PC-9 (cell line): ENCODE measurements at regions of chr15 and their contacts with region 1.

Region 1: GRCh38 chr15:79339564-79340314 is 28.8 kb downstream of the TMED3 start:
- DNase-seq: peak in 1 of 2 experiments; percentile 3
- H3K4me3 ChIP-seq: no peak overlapping the region
- H3K27ac ChIP-seq: no peak overlapping the region
- H3K4me1 ChIP-seq: no peaks in the 10 kb centered on the region
- H3K27me3 ChIP-seq: no peaks in the 10 kb centered on the region
- CTCF ChIP-seq: peak; percentile 86

Region 2: GRCh38 chr15:79028411-79028964 is 311.3 kb before region 1 on chr15:
- CTCF ChIA-PET with region 1: no interaction called
- POLR2A ChIA-PET with region 1: no interaction called
- intact Hi-C with region 1: loop called (anchors 10 kb)
- DNase-seq: peak in 1 of 2 experiments; percentile 46
- H3K4me3 ChIP-seq: no peak overlapping the region
- H3K27ac ChIP-seq: no peak overlapping the region
- H3K4me1 ChIP-seq: no peaks in the 10 kb centered on the region
- H3K27me3 ChIP-seq: no peaks in the 10 kb centered on the region
- CTCF ChIP-seq: peak; percentile 98

Region 3: GRCh38 chr15:79596051-79596507 is 256.3 kb after region 1 on chr15:
- CTCF ChIA-PET with region 1: interaction called, 3 read pairs
- POLR2A ChIA-PET with region 1: interaction called, 5 read pairs
- intact Hi-C with region 1: loop called (anchors 1 kb)
- DNase-seq: peak; percentile 55 to 78
- H3K4me3 ChIP-seq: no peak overlapping the region
- H3K27ac ChIP-seq: no peak overlapping the region
- H3K4me1 ChIP-seq: no peaks in the 10 kb centered on the region
- H3K27me3 ChIP-seq: peaks cover 62% of the 10 kb centered on the region
- CTCF ChIP-seq: peak; percentile 91

Region 4: GRCh38 chr15:79736435-79737000 is 396.8 kb after region 1 on chr15:
- CTCF ChIA-PET with region 1: interaction called, 27 read pairs
- POLR2A ChIA-PET with region 1: no interaction called
- intact Hi-C with region 1: no loop called
- DNase-seq: no peak
- H3K4me3 ChIP-seq: no peak overlapping the region
- H3K27ac ChIP-seq: no peak overlapping the region
- H3K4me1 ChIP-seq: no peaks in the 10 kb centered on the region
- H3K27me3 ChIP-seq: no peaks in the 10 kb centered on the region
- CTCF ChIP-seq: no peak

Region 5: DNA sequence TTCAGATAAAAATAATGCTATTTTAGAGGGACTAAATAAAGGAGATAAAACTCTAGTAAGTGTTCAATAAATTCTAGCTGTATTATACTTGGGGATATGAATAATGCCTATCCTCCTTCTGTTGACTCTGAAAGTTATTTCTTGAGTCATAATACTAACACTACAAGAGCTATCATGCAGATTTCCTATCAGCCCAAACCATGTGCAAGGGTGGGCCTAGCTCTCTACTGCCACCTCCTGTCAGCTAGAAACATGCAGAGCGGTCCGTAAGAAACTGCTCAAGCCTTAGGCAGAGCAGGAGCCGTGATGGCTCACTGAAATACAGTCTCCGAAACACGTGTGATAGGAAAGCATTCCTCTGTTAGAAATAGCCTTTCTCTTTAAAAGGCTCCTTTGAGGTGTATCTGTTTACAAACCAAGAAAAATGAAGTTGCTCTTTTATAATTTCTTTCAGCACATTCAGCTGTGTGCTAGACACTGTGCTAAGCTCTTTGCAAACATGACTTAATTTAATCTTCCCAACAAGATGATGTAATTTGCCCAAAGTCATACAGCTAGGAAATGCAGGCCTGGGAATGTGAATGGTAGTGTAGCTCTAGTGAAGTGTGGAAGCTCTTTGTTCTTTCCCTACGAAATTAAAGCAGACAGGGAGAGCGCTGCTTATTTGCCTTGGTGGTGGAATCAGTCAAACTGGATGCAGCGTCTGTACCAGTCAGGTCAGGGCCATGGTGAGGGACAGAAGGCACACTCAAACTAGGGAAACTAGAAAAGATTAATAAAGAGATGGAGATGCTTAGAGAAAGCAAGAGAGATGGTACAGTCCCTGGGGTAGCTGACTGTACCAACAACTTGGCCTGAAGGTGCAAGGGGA is 514.0 kb after region 1 on chr15:
- CTCF ChIA-PET with region 1: interaction called, 3 read pairs
- POLR2A ChIA-PET with region 1: no interaction called
- intact Hi-C with region 1: loop called (anchors 10 kb)
- DNase-seq: peak; percentile 45 to 53
- H3K4me3 ChIP-seq: no peak overlapping the region
- H3K27ac ChIP-seq: no peak overlapping the region
- H3K4me1 ChIP-seq: no peaks in the 10 kb centered on the region
- H3K27me3 ChIP-seq: no peaks in the 10 kb centered on the region
- CTCF ChIP-seq: peak; percentile 83

Region 6: GRCh38 chr15:80309769-80310384 is 970.1 kb after region 1 on chr15:
- CTCF ChIA-PET with region 1: no interaction called
- POLR2A ChIA-PET with region 1: no interaction called
- intact Hi-C with region 1: loop called (anchors 2 kb)
- DNase-seq: no peak
- H3K4me3 ChIP-seq: no peak overlapping the region
- H3K27ac ChIP-seq: no peak overlapping the region
- H3K4me1 ChIP-seq: no peaks in the 10 kb centered on the region
- H3K27me3 ChIP-seq: peaks cover 29% of the 10 kb centered on the region
- CTCF ChIP-seq: peak; percentile 58

Region 7: GRCh38 chr15:81106560-81106959 is 1766.8 kb after region 1 on chr15:
- CTCF ChIA-PET with region 1: no interaction called
- POLR2A ChIA-PET with region 1: no interaction called
- intact Hi-C with region 1: loop called (anchors 10 kb)
- DNase-seq: peak; percentile 48
- H3K4me3 ChIP-seq: no peak overlapping the region
- H3K27ac ChIP-seq: no peak overlapping the region
- H3K4me1 ChIP-seq: no peaks in the 10 kb centered on the region
- H3K27me3 ChIP-seq: peaks cover 17% of the 10 kb centered on the region; the same call in 1 of the 2 replicates
- CTCF ChIP-seq: peak; percentile 78